Activated naive CD4-positive, alpha-beta T cell treated with anti-CD3 and anti-CD28 coated beads for 36 hours (primary cell): ENCODE measurements at regions of chr7 and their contacts with region 1.

Region 1: DNA sequence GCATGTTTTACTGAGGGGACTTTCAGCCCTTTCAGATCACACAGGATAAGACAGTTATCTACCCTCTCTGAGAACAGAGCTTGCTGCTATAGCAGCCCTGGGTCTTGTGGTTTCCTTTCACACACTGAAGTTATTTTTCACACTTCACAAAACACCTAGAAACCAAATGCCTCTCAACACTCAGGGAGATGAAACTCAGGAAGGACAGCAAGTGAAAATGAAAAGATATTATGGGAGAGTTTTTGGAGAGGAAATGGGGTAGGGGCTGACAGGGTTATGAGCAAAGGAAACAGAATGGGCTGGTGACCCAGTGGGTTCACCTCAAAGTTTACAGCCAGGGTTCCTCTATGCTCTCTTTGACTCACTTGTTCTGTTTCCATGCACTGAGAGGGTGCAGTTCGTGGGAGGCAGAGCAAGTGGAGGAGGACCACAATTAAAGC is 17.0 kb upstream of the GIMAP2 start:
- DNase-seq: peak; percentile 71
- H3K4me3 Mint-ChIP-seq: peak overlapping the region; percentile 19
- H3K27ac Mint-ChIP-seq: peak overlapping the region; percentile 95
- H3K4me1 Mint-ChIP-seq: peaks cover 88% of the 10 kb centered on the region
- H3K27me3 Mint-ChIP-seq: no peaks in the 10 kb centered on the region

Region 2: GRCh38 chr7:150514748-150515222 is 153.7 kb before region 1 on chr7 and contains the start of gene GIMAP7:
- CTCF ChIA-PET with region 1: no interaction called
- intact Hi-C with region 1: loop called (anchors 2 kb)
- DNase-seq: peak; percentile 70
- H3K4me3 Mint-ChIP-seq: peak within 1 kb of the TSS; percentile 96
- H3K27ac Mint-ChIP-seq: peak within 1 kb of the TSS; percentile 98
- H3K4me1 Mint-ChIP-seq: peaks cover 49% of the 10 kb centered on the region
- H3K27me3 Mint-ChIP-seq: no peaks in the 10 kb centered on the region
- total RNA-seq, gene GIMAP7: 41.6 TPM

Region 3: GRCh38 chr7:150610233-150610632 is 58.3 kb before region 1 on chr7:
- CTCF ChIA-PET with region 1: no interaction called
- intact Hi-C with region 1: loop called (anchors 1 kb)
- DNase-seq: no peak
- H3K4me3 Mint-ChIP-seq: no peak overlapping the region
- H3K27ac Mint-ChIP-seq: peak overlapping the region; percentile 92
- H3K4me1 Mint-ChIP-seq: peaks cover 83% of the 10 kb centered on the region
- H3K27me3 Mint-ChIP-seq: no peaks in the 10 kb centered on the region

Region 4: DNA sequence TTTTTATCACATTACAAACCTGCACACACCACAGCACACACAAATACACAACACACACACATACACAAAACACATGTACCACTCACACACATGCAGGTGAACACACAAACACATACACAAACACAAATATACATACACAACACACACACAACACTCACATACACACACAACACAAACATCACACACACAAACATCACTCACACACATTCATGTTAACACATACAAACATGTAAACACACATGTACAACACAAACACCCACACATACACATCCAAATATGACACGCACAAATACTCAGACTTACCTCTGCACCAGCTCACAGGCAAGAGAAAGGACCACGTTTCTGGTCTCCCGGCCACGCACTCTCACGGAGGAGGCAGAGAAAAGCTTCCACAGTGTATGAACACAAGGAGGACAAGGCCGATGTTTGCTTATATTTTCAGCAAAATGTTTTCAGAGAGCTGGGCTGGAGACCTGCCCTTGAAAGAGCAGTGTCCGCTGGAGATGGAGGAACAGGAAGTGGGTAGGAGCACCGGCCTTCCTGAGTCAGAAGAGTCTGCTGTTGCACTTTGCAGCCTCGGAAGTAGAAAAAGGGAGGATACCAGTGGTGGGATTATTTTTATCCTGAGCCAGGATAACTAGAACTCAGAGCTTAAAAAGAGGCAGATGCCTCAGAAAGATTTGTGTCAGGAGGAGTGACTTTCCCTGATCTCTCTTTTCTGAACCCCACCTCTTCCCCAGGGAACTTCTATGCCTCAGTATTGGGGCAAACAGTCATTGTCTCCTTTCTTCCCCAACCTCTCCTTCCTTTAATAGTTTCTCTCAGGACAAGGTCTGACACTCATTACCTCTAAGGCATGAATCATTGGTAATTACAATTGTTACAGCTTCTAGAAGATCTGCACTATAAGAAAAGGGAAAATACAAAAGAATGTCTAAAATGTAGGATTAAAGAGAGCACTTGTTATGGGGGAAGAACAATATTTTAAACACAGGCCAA is 36.3 kb before region 1 on chr7 and contains the start of gene GIMAP6:
- CTCF ChIA-PET with region 1: interaction called, 4 read pairs
- intact Hi-C with region 1: loop called (anchors 1 kb)
- DNase-seq: peak; percentile 64
- H3K4me3 Mint-ChIP-seq: peak within 1 kb of the TSS; percentile 85
- H3K27ac Mint-ChIP-seq: peak within 1 kb of the TSS; percentile 92
- H3K4me1 Mint-ChIP-seq: peaks cover 67% of the 10 kb centered on the region
- H3K27me3 Mint-ChIP-seq: no peaks in the 10 kb centered on the region
- total RNA-seq, gene GIMAP6: 19.2 to 20.7 TPM

Region 5: GRCh38 chr7:150685219-150686029 is 16.9 kb after region 1 on chr7 and contains the start of gene GIMAP2:
- CTCF ChIA-PET with region 1: interaction called, 6 read pairs
- intact Hi-C with region 1: loop called (anchors 1 kb)
- DNase-seq: peak; percentile 56
- H3K4me3 Mint-ChIP-seq: peak within 1 kb of the TSS; percentile 93
- H3K27ac Mint-ChIP-seq: peak within 1 kb of the TSS; percentile 98
- H3K4me1 Mint-ChIP-seq: peaks cover 73% of the 10 kb centered on the region
- H3K27me3 Mint-ChIP-seq: no peaks in the 10 kb centered on the region
- total RNA-seq, gene GIMAP2: 45.0 to 49.5 TPM

Region 6: DNA sequence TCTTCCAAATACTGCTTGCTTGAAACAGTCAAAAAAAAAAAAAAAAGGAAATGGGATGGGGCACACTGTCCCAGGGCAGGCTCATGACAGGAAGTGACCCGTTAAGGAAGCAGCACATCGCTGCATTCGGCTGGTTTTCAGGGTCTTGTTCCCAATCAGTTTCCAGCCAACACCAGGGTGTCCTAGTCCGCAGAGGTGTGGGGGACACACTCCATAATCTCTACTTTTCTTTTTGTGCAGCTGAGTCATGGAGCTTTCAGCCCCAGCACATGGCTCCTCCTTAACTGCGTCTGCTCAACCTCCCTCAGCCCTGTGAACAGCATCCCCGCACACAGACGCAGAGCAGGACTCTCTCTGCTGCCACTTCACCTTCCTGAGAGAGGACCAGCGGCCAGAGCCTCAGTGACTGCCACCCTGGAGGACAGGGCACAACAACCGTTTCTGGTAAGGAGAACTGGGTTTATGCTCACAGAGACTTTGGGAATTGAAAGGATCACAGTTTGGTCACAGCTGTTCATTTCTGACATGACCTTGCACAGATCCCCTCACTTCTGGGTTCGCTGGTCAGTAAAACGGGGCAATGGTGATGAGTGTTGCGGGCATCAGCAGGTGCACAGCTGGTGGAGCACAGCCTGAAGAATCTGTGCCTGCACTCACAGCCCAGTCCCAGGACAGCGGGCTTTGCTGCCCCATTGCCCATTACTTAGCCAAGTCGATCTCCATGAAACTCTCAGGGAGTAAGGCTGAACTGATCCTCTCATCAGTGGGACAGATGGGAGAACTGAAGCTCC is 69.0 kb after region 1 on chr7 and contains the start of gene GIMAP5:
- CTCF ChIA-PET with region 1: interaction called, 5 read pairs
- intact Hi-C with region 1: loop called (anchors 1 kb)
- DNase-seq: peak; percentile 66
- H3K4me3 Mint-ChIP-seq: peak within 1 kb of the TSS; percentile 88
- H3K27ac Mint-ChIP-seq: peak within 1 kb of the TSS; percentile 95
- H3K4me1 Mint-ChIP-seq: peaks cover 72% of the 10 kb centered on the region
- H3K27me3 Mint-ChIP-seq: no peaks in the 10 kb centered on the region
- total RNA-seq, gene GIMAP5: 32.1 to 32.3 TPM